ENCODE measurements at regions of chr3 and their contacts with region 1.

Region 1: DNA sequence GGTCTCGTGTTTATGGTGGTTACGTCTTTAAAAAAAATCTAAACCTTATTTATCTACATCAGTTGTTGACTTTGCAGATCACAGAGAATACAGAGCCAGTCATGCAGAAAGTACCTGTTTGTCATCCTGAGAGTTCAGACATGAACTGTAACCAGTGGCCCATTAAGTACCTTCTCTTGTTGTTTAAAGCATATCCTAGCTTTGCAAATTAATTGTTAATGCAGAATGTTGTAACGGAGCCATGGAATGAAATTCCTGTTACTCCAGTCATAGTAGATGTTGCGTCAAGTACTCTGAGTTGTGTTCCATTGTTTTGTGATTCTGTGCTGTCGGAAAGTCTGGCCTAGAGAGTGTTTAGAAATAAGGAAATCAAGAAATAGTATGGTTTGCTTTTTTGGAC is 205.2 kb downstream of the RBMS3 start:
- DNase-seq: peak; percentile 88
- ATAC-seq: peak; percentile 93
- H3K4me3 ChIP-seq: peak overlapping the region; percentile 34; the same call in 1 of the 2 replicates
- H3K27ac ChIP-seq: peak overlapping the region; percentile 92
- H3K4me1 ChIP-seq: peaks cover 33% of the 10 kb centered on the region
- H3K27me3 ChIP-seq: no peaks in the 10 kb centered on the region
- CTCF ChIP-seq: no peak

Region 2: GRCh38 chr3:29525254-29525881 is 39.3 kb after region 1 on chr3:
- CTCF ChIA-PET with region 1: no interaction called
- POLR2A ChIA-PET with region 1: no interaction called
- intact Hi-C with region 1: loop called (anchors 1 kb)
- DNase-seq: peak; percentile 60
- ATAC-seq: peak; percentile 91
- H3K4me3 ChIP-seq: no peak overlapping the region
- H3K27ac ChIP-seq: no peak overlapping the region
- H3K4me1 ChIP-seq: peaks cover 12% of the 10 kb centered on the region; the same call in 1 of the 2 replicates
- H3K27me3 ChIP-seq: no peaks in the 10 kb centered on the region
- CTCF ChIP-seq: no peak

Region 3: DNA sequence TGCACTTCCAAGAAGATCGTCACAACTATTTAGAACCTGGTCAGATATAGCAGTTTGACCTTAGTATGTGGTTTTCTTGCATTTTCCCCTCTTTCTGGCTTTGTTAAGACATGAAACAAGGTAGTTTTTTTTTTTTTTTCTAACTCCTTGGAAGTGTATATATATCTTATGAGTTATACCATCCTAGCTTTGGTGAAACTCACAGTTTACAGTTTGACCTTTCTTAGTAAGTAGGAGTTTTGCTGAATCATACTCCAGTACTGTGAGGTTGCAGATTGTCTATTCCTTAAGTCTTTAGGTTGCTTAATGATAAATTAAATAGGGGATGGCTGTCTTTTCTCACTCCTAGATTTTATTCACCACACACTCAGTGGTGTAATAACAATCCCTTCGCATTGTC is 119.7 kb after region 1 on chr3:
- CTCF ChIA-PET with region 1: no interaction called
- POLR2A ChIA-PET with region 1: no interaction called
- intact Hi-C with region 1: loop called (anchors 2 kb)
- DNase-seq: peak; percentile 18
- ATAC-seq: no peak
- H3K4me3 ChIP-seq: no peak overlapping the region
- H3K27ac ChIP-seq: no peak overlapping the region
- H3K4me1 ChIP-seq: peaks cover 23% of the 10 kb centered on the region
- H3K27me3 ChIP-seq: no peaks in the 10 kb centered on the region
- CTCF ChIP-seq: no peak

Region 4: DNA sequence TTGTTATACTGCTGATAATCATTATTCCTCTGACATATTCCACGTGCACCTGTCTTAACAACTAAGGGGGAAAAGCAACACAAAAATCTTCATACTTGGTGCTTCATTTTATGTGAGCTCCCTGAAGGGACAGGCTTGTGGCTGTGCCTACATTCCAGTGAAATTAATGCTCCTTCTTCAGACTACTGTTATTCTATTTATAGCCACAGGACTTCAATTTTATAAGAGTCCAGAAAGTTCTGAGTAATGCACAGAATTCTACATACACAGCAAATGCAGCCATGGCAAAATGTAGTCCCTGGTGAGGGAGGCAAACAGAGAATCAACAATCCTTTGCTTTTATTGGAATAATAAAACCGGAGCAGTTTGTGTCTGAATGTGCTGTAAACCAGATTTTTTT is 211.9 kb after region 1 on chr3:
- CTCF ChIA-PET with region 1: no interaction called
- POLR2A ChIA-PET with region 1: no interaction called
- intact Hi-C with region 1: no loop called
- DNase-seq: peak; percentile 21
- ATAC-seq: peak; percentile 22
- H3K4me3 ChIP-seq: no peak overlapping the region
- H3K27ac ChIP-seq: no peak overlapping the region
- H3K4me1 ChIP-seq: peaks cover 36% of the 10 kb centered on the region
- H3K27me3 ChIP-seq: no peaks in the 10 kb centered on the region
- CTCF ChIP-seq: no peak

Measured in PC-3 (cell line).